Left ventricle myocardium inferior (tissue), 1 donor: ENCODE measurements at regions of chr6 and their contacts with region 1.

Region 1: GRCh38 chr6:44172731-44173500 is 14.3 kb downstream of the CAPN11 start:
- DNase-seq: peak; percentile 88
- H3K4me3 ChIP-seq: no peak overlapping the region
- H3K27ac ChIP-seq: no peak overlapping the region
- H3K4me1 ChIP-seq: peaks cover 34% of the 10 kb centered on the region
- H3K27me3 ChIP-seq: no peaks in the 10 kb centered on the region
- CTCF ChIP-seq: peak; percentile 92

Region 2: GRCh38 chr6:44237813-44238433 is 65.0 kb after region 1 on chr6:
- intact Hi-C with region 1: loop called (anchors 2 kb)
- DNase-seq: peak; percentile 81
- H3K4me3 ChIP-seq: peak overlapping the region; percentile 78
- H3K27ac ChIP-seq: peak overlapping the region; percentile 98
- H3K4me1 ChIP-seq: peaks cover 55% of the 10 kb centered on the region
- H3K27me3 ChIP-seq: no peaks in the 10 kb centered on the region
- CTCF ChIP-seq: peak; percentile 97

Region 3: GRCh38 chr6:44312901-44313788 is 140.2 kb after region 1 on chr6 and contains the start of gene AARS2:
- intact Hi-C with region 1: no loop called
- DNase-seq: peak; percentile 90
- H3K4me3 ChIP-seq: peak within 1 kb of the TSS; percentile 97
- H3K27ac ChIP-seq: peak within 1 kb of the TSS; percentile 87
- H3K4me1 ChIP-seq: peaks cover 40% of the 10 kb centered on the region
- H3K27me3 ChIP-seq: peaks cover 9% of the 10 kb centered on the region
- CTCF ChIP-seq: peak; percentile 99
- total RNA-seq, gene AARS2: 10.6 TPM